ENCODE measurements at regions of chr17 and their contacts with region 1.

Region 1: DNA sequence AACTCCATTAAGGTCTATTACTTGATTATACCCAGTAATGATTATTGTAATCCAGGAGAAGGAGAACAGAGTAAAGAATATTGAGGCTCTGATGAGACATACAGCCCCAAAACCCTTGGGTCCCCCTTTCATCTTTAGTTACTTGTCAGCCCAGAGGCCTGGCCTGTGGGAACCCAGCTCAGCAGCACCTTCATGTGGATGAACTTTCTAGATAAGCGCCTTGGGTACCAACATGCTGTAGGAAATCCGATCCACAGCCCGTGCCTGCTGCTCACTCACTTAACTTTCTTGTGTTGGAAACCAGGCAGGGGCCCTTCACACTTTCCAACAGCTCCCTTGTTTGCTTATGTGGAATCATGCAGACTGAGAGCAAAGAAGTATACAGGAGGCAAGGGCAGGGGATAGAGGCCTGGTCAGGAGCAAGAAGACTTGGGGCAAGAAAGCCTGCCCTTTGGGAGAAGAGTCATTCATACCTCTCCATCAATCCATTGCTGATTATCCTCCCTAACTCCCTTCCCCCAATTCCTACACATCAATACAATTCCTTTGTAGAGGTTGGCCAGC is 64.0 kb upstream of the SOX9 start:
- DNase-seq: no peak
- ATAC-seq: no peak
- H3K4me3 ChIP-seq: no peak overlapping the region
- H3K27ac ChIP-seq: peak overlapping the region; percentile 6
- H3K4me1 ChIP-seq: no peaks in the 10 kb centered on the region; the same call in 1 of the 2 replicates
- H3K27me3 ChIP-seq: no peaks in the 10 kb centered on the region
- CTCF ChIP-seq: 0 out of 6 replicates have a peak, but pooled peaks of 2 of the 3 experiments have one; percentile 0 to 4
- EP300 ChIP-seq: no peak
- POLR2A ChIP-seq: no peak
- RAD21 ChIP-seq: peak; percentile 73

Region 2: DNA sequence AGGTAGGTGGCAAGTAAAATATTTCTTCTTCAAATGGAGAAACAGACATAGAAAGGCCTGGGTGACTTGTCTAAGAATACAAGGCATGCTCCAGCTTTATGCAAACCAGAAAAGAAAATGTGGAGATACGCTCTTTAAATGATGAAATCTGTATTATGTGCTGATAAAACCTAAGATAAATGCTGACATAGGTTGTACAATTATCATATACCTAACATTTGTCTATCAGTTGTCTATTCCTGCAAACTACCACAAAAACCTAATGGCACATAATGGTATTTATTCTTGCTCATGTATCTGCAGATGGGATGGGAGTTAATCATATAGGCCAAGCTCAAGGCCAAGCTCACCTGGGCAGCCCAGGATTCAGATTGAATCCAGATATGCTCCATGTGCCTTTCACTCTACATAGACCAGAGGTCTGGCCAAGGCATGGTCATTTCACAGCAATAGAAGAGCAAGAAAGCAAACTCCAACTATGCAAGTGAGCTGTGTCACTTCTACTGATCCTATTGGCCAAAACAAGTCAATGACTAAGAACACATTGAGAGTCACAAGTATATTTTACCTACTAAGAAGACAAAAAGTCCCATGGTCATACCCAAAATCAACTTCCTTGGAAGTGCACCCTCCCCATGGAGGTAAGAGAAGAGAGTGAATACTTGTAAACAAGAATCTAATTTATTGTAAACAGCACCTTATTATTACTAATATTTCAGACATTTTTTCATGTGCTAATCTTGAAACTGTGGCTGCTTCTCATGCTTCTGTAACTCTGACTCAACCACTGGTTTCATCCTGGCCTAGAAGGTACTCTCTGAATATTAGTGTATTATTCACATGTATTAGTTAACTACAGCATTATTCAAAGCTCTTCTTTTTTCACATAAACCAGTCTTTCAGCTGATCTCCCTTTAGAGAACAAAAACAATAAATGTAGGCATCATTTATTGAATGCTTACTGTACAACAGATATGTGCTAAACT is 206.7 kb before region 1 on chr17:
- CTCF ChIA-PET with region 1: no interaction called
- POLR2A ChIA-PET with region 1: no interaction called
- RAD21 ChIA-PET with region 1: no interaction called
- SMC1A ChIA-PET with region 1: no interaction called
- in situ Hi-C with region 1: no loop called
- intact Hi-C with region 1: no loop called
- DNase-seq: no peak
- ATAC-seq: peak; percentile 90
- H3K4me3 ChIP-seq: no peak overlapping the region
- H3K27ac ChIP-seq: peak overlapping the region; percentile 31; the same call in 1 of the 2 replicates
- H3K4me1 ChIP-seq: no peaks in the 10 kb centered on the region
- H3K27me3 ChIP-seq: no peaks in the 10 kb centered on the region
- CTCF ChIP-seq: no peak
- EP300 ChIP-seq: no peak
- POLR2A ChIP-seq: no peak
- RAD21 ChIP-seq: no peak

Region 3: GRCh38 chr17:71996557-71996956 is 60.3 kb before region 1 on chr17:
- CTCF ChIA-PET with region 1: no interaction called
- POLR2A ChIA-PET with region 1: no interaction called
- RAD21 ChIA-PET with region 1: no interaction called
- SMC1A ChIA-PET with region 1: no interaction called
- in situ Hi-C with region 1: no loop called
- intact Hi-C with region 1: no loop called
- DNase-seq: no peak
- ATAC-seq: no peak
- H3K4me3 ChIP-seq: no peak overlapping the region
- H3K27ac ChIP-seq: no peak overlapping the region
- H3K4me1 ChIP-seq: no peaks in the 10 kb centered on the region
- H3K27me3 ChIP-seq: no peaks in the 10 kb centered on the region
- CTCF ChIP-seq: no peak
- EP300 ChIP-seq: no peak
- POLR2A ChIP-seq: no peak
- RAD21 ChIP-seq: no peak

Region 4: GRCh38 chr17:72030067-72030899 is 26.5 kb before region 1 on chr17:
- CTCF ChIA-PET with region 1: no interaction called
- POLR2A ChIA-PET with region 1: no interaction called
- RAD21 ChIA-PET with region 1: interaction called, 4 read pairs
- SMC1A ChIA-PET with region 1: interaction called, 6 read pairs
- in situ Hi-C with region 1: no loop called
- intact Hi-C with region 1: loop called (anchors 2 kb)
- DNase-seq: peak; percentile 71
- ATAC-seq: peak; percentile 81
- H3K4me3 ChIP-seq: peak overlapping the region; percentile 80
- H3K27ac ChIP-seq: peak overlapping the region; percentile 91
- H3K4me1 ChIP-seq: peaks cover 45% of the 10 kb centered on the region
- H3K27me3 ChIP-seq: no peaks in the 10 kb centered on the region
- CTCF ChIP-seq: peak; percentile 30 to 48 (median 40); a peak in 4 of 6 replicates
- EP300 ChIP-seq: 0 out of 4 replicates have a peak, but pooled peaks of 1 of the 2 experiments have one; percentile 4
- POLR2A ChIP-seq: peak; percentile 65
- RAD21 ChIP-seq: peak; percentile 25; the same call in 1 of the 2 replicates

Region 5: GRCh38 chr17:72134595-72134994 is 77.8 kb after region 1 on chr17:
- CTCF ChIA-PET with region 1: no interaction called
- POLR2A ChIA-PET with region 1: no interaction called
- RAD21 ChIA-PET with region 1: no interaction called
- SMC1A ChIA-PET with region 1: no interaction called
- in situ Hi-C with region 1: no loop called
- intact Hi-C with region 1: no loop called
- DNase-seq: no peak
- ATAC-seq: no peak
- H3K4me3 ChIP-seq: no peak overlapping the region
- H3K27ac ChIP-seq: no peak overlapping the region
- H3K4me1 ChIP-seq: no peaks in the 10 kb centered on the region
- H3K27me3 ChIP-seq: no peaks in the 10 kb centered on the region
- CTCF ChIP-seq: no peak
- EP300 ChIP-seq: no peak
- POLR2A ChIP-seq: no peak
- RAD21 ChIP-seq: no peak

Region 6: DNA sequence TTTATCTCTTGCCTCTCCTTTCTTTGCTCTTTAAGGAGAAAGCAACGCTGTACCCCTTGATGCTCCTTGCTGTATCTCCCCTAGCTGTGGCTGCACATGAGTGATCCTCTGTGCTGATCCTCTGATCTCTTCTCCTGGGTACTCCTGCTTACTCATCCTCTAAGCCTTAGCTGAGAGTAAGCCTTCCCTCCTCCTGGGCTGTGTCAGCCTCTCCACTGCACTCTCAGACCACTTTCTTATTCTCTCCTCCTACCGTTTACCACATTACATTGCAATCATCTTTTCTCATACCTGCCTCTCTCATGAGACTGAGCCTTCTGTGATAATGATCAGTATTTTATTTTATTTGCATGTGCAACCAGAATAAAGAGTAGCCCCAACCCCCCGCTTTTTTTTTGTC is 89.2 kb after region 1 on chr17:
- CTCF ChIA-PET with region 1: no interaction called
- POLR2A ChIA-PET with region 1: no interaction called
- RAD21 ChIA-PET with region 1: no interaction called
- SMC1A ChIA-PET with region 1: no interaction called
- in situ Hi-C with region 1: no loop called
- intact Hi-C with region 1: no loop called
- DNase-seq: no peak
- ATAC-seq: no peak
- H3K4me3 ChIP-seq: no peak overlapping the region
- H3K27ac ChIP-seq: no peak overlapping the region
- H3K4me1 ChIP-seq: no peaks in the 10 kb centered on the region
- H3K27me3 ChIP-seq: no peaks in the 10 kb centered on the region
- CTCF ChIP-seq: no peak
- EP300 ChIP-seq: no peak
- POLR2A ChIP-seq: no peak
- RAD21 ChIP-seq: no peak